HCT116 (cell line): ENCODE measurements at regions of chr1 and their contacts with region 1.

Region 1: GRCh38 chr1:2821966-2822620 is 20.6 kb upstream of the TTC34 start:
- DNase-seq: no peak
- ATAC-seq: peak; percentile 99
- H3K4me3 ChIP-seq: no peak overlapping the region
- H3K27ac ChIP-seq: no peak overlapping the region
- H3K4me1 ChIP-seq: 0 out of 4 replicates have a peak, but pooled peaks cover 0 to 2% of the 10 kb centered on the region in 2 experiments
- H3K27me3 ChIP-seq: no peaks in the 10 kb centered on the region
- CTCF ChIP-seq: peak; percentile 62 to 71 (median 70)
- POLR2A ChIP-seq: no peak
- RAD21 ChIP-seq: peak; percentile 91

Region 2: GRCh38 chr1:2391041-2391930 is 430.8 kb before region 1 on chr1 and contains the starts of genes MORN1 and RER1:
- CTCF ChIA-PET with region 1: no interaction called
- POLR2A ChIA-PET with region 1: no interaction called
- RAD21 ChIA-PET with region 1: no interaction called
- intact Hi-C with region 1: no loop called
- DNase-seq: peak; percentile 96
- ATAC-seq: peak; percentile 92
- H3K4me3 ChIP-seq: peak within 1 kb of the TSS; percentile 92 to 99
- H3K27ac ChIP-seq: peak within 1 kb of the TSS; percentile 85
- H3K4me1 ChIP-seq: peaks cover 17 to 25% of the 10 kb centered on the region in 2 experiments
- H3K27me3 ChIP-seq: no peaks in the 10 kb centered on the region
- CTCF ChIP-seq: no peak
- POLR2A ChIP-seq: peak; percentile 51
- RAD21 ChIP-seq: no peak
- total RNA-seq, gene MORN1: 21.4 TPM
- total RNA-seq, gene RER1: 155 TPM

Region 3: DNA sequence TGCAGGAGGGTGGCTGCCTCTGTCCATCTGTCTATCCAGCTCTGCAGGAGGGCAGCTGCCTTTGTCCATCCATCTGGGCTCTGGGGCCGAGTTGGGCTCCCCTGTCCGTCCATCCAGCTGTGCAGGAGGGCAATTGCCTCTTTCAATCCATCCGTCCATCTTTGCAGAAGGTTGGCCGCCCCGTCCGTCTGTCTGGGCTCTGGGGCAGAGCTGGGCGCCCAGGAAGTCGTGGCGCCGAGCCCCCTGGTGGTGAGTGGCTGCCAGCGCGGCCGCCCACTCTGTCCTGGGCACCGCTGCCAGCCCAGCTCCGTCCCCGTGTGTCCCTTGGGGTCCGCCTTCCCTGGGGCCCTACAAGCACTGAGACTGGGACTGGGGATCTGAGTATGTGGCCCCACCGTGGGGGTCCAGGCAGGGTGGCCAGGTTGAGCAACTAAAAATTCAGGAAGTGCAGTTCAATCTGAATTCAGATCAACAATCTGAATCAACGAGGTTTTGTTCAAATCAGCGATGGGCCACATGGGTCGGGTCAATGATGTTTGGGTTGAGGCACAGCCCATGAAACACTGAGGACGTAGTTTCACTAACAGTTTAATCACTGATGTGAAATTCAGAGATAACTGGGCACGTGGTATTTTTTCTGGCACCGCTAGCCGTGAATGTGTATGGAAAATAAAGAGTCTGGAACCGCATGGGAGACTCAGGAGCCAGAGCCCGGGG is 100.0 kb after region 1 on chr1:
- CTCF ChIA-PET with region 1: interaction called, 6 read pairs
- POLR2A ChIA-PET with region 1: no interaction called
- RAD21 ChIA-PET with region 1: no interaction called
- intact Hi-C with region 1: loop called (anchors 2 kb)
- DNase-seq: peak; percentile 4
- ATAC-seq: peak; percentile 96
- H3K4me3 ChIP-seq: no peak overlapping the region
- H3K27ac ChIP-seq: no peak overlapping the region
- H3K4me1 ChIP-seq: no peaks in the 10 kb centered on the region
- H3K27me3 ChIP-seq: no peaks in the 10 kb centered on the region
- CTCF ChIP-seq: peak; percentile 48 to 82 (median 77); a peak in 5 of 6 replicates
- POLR2A ChIP-seq: no peak
- RAD21 ChIP-seq: peak; percentile 55

Region 4: GRCh38 chr1:3423245-3423829 is 601.2 kb after region 1 on chr1:
- CTCF ChIA-PET with region 1: interaction called, 17 read pairs
- POLR2A ChIA-PET with region 1: no interaction called
- RAD21 ChIA-PET with region 1: interaction called in 1 of 2 experiments, 3 read pairs
- intact Hi-C with region 1: loop called (anchors 1 kb)
- DNase-seq: no peak
- ATAC-seq: no peak
- H3K4me3 ChIP-seq: no peak overlapping the region
- H3K27ac ChIP-seq: no peak overlapping the region
- H3K4me1 ChIP-seq: peaks cover 0 to 8% of the 10 kb centered on the region in 2 experiments; a peak in 2 of 4 replicates
- H3K27me3 ChIP-seq: no peaks in the 10 kb centered on the region
- CTCF ChIP-seq: no peak
- POLR2A ChIP-seq: no peak
- RAD21 ChIP-seq: no peak